ENCODE measurements at regions of chr12 and their contacts with region 1.

Region 1: DNA sequence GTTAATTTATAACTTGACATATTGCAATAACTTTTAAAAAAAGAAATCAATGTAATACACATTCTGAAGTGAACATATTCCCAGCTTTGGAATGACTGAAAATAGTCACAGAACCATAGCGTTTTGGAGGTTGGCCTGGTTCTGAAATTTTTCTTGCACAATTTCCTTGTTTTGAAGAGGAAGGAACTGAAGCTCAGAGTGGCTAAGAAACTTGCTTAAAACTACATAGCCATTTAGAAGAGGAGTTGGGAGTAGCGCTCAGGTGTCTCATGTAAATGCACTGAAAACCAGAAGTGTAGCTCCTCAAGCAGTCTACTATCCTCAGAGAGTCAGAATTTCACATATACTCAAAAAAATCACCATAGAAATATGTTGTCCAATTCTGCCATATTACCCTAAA is 41.2 kb downstream of the SLC38A1 start:
- DNase-seq: peak in 1 of 2 donors; percentile 9
- ATAC-seq: no peak
- H3K4me3 ChIP-seq: no peak overlapping the region
- H3K4me3 Mint-ChIP-seq: no peak overlapping the region
- H3K27ac ChIP-seq: no peak overlapping the region
- H3K27ac Mint-ChIP-seq: peak overlapping the region; percentile 16 to 79
- H3K4me1 ChIP-seq: peaks cover 6% of the 10 kb centered on the region
- H3K4me1 Mint-ChIP-seq: peaks cover 39 to 56% of the 10 kb centered on the region in 2 donors
- H3K27me3 ChIP-seq: no peaks in the 10 kb centered on the region
- H3K27me3 Mint-ChIP-seq: no peaks in the 10 kb centered on the region
- CTCF ChIP-seq: no peak

Region 2: GRCh38 chr12:45634273-45634917 is 593.2 kb before region 1 on chr12:
- intact Hi-C with region 1: no loop called
- DNase-seq: no peak
- ATAC-seq: no peak
- H3K4me3 ChIP-seq: no peak overlapping the region
- H3K4me3 Mint-ChIP-seq: no peak overlapping the region
- H3K27ac ChIP-seq: no peak overlapping the region
- H3K27ac Mint-ChIP-seq: no peak overlapping the region
- H3K4me1 ChIP-seq: no peaks in the 10 kb centered on the region
- H3K4me1 Mint-ChIP-seq: no peaks in the 10 kb centered on the region
- H3K27me3 ChIP-seq: no peaks in the 10 kb centered on the region
- H3K27me3 Mint-ChIP-seq: no peaks in the 10 kb centered on the region
- CTCF ChIP-seq: no peak

Region 3: DNA sequence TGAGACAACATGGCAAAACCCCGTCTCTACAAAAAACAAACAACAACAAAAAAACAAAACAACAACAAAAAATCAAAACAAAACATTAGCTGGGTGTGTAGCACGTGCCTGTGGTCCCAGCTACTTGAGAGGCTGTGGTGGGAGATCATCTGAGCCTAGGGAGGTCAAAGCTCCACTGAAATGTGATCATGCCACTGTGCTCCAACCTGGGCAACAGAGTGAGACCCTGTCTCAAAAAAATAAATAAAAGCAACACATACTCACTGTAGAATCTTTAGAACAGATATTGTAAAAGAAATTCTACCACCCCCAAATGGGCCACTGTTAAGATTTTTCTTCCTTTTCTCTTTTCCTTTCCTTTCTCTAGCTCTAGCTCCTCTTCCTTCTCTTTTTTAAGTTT is 15.0 kb after region 1 on chr12:
- intact Hi-C with region 1: loop called (anchors 2 kb)
- DNase-seq: no peak
- ATAC-seq: no peak
- H3K4me3 ChIP-seq: no peak overlapping the region
- H3K4me3 Mint-ChIP-seq: peak overlapping the region; percentile 18
- H3K27ac ChIP-seq: no peak overlapping the region
- H3K27ac Mint-ChIP-seq: peak overlapping the region; percentile 1 to 7
- H3K4me1 ChIP-seq: peaks cover 16% of the 10 kb centered on the region
- H3K4me1 Mint-ChIP-seq: peaks cover 63 to 83% of the 10 kb centered on the region in 2 donors
- H3K27me3 ChIP-seq: no peaks in the 10 kb centered on the region
- H3K27me3 Mint-ChIP-seq: no peaks in the 10 kb centered on the region
- CTCF ChIP-seq: no peak